ENCODE measurements at regions of chr1 and their contacts with region 1.

Region 1: DNA sequence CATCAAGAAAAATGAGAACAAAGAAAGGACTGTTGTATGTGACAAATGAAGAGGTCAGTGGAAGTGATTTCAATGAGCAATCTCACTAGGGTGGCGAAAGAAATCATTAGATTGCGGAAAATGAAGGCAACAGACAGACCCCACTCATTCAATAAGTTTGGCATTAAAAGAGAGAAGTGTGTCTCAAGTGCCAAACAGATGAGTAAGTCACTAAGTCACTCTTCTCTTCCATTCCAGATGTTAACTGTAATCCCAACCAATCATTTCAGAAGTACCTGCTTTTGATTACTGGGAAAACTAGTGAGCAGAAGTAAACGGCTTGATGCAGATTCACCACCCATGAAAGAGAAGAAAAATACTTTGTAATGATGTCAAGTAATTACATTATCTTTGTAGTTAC is 144.3 kb upstream of the PRMT6 start:
- DNase-seq: no peak
- H3K4me3 ChIP-seq: no peak overlapping the region
- H3K27ac ChIP-seq: no peak overlapping the region
- H3K4me1 ChIP-seq: no peaks in the 10 kb centered on the region
- H3K27me3 ChIP-seq: no peaks in the 10 kb centered on the region
- CTCF ChIP-seq: no peak
- POLR2A ChIP-seq: no peak

Region 2: GRCh38 chr1:106676021-106676420 is 236.1 kb before region 1 on chr1:
- intact Hi-C with region 1: no loop called
- DNase-seq: no peak
- H3K4me3 ChIP-seq: no peak overlapping the region
- H3K27ac ChIP-seq: no peak overlapping the region
- H3K4me1 ChIP-seq: no peaks in the 10 kb centered on the region
- H3K27me3 ChIP-seq: no peaks in the 10 kb centered on the region
- CTCF ChIP-seq: no peak
- POLR2A ChIP-seq: no peak

Region 3: GRCh38 chr1:106957783-106958182 is 45.7 kb after region 1 on chr1:
- intact Hi-C with region 1: loop called (anchors 2 kb)
- DNase-seq: no peak
- H3K4me3 ChIP-seq: no peak overlapping the region
- H3K27ac ChIP-seq: no peak overlapping the region
- H3K4me1 ChIP-seq: no peaks in the 10 kb centered on the region
- H3K27me3 ChIP-seq: no peaks in the 10 kb centered on the region
- CTCF ChIP-seq: no peak
- POLR2A ChIP-seq: no peak